CD8-positive, alpha-beta T cell (primary cell): ENCODE measurements at regions of chrX and their contacts with region 1.

Region 1: GRCh38 chrX:48021026-48021900 is 14.5 kb downstream of the SPACA5 start:
- DNase-seq: peak; percentile 51 to 89 (median 76)
- ATAC-seq: peak; percentile 64
- H3K4me3 ChIP-seq: peak overlapping the region; percentile 65 to 74
- H3K4me3 Mint-ChIP-seq: peak overlapping the region; percentile 95
- H3K27ac ChIP-seq: peak overlapping the region; percentile 73 to 95
- H3K27ac Mint-ChIP-seq: peak overlapping the region; percentile 98
- H3K4me1 ChIP-seq: peaks cover 3% of the 10 kb centered on the region
- H3K4me1 Mint-ChIP-seq: peaks cover 15% of the 10 kb centered on the region
- H3K27me3 ChIP-seq: no peaks in the 10 kb centered on the region
- H3K27me3 Mint-ChIP-seq: no peaks in the 10 kb centered on the region
- CTCF ChIP-seq: no peak

Region 2: GRCh38 chrX:47361538-47362511 is 659.4 kb before region 1 on chrX:
- CTCF ChIA-PET with region 1: no interaction called
- POLR2A ChIA-PET with region 1: no interaction called
- intact Hi-C with region 1: loop called in 1 of 2 experiments (anchors 10 kb)
- DNase-seq: peak in 8 of 9 experiments; percentile 5 to 83 (median 28)
- ATAC-seq: peak; percentile 55
- H3K4me3 ChIP-seq: peak overlapping the region in 1 of 2 experiments; percentile 20
- H3K4me3 Mint-ChIP-seq: peak overlapping the region; percentile 58
- H3K27ac ChIP-seq: peak overlapping the region in 1 of 2 experiments; percentile 83
- H3K27ac Mint-ChIP-seq: peak overlapping the region; percentile 85
- H3K4me1 ChIP-seq: peaks cover 20% of the 10 kb centered on the region
- H3K4me1 Mint-ChIP-seq: peaks cover 33% of the 10 kb centered on the region
- H3K27me3 ChIP-seq: no peaks in the 10 kb centered on the region
- H3K27me3 Mint-ChIP-seq: no peaks in the 10 kb centered on the region
- CTCF ChIP-seq: no peak

Region 3: DNA sequence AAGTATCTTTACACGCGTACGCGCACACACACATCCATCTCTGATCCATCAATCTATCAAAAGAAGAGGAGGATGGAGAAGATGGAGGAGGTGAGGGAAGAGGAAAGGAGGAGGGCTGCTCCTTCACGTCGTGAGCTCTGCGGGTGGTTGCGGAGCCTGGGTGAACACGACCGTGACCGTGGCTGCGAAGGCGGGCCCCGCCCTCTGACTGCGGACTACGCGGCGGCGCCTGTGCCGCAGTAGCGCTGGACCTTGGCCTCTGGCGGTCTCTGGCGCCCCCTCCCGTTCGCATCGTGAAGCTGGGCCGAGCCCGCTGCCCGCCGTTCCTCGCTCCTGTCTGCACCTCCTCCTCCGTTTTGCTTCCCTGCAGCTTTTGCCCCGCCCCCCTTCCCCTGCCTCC is 498.0 kb before region 1 on chrX:
- CTCF ChIA-PET with region 1: no interaction called
- POLR2A ChIA-PET with region 1: no interaction called
- intact Hi-C with region 1: loop called in 1 of 2 experiments (anchors 5 kb)
- DNase-seq: peak; percentile 53 to 90 (median 78)
- ATAC-seq: peak; percentile 97
- H3K4me3 ChIP-seq: peak overlapping the region; percentile 47 to 49
- H3K4me3 Mint-ChIP-seq: peak overlapping the region; percentile 69
- H3K27ac ChIP-seq: no peak overlapping the region
- H3K27ac Mint-ChIP-seq: no peak overlapping the region
- H3K4me1 ChIP-seq: no peaks in the 10 kb centered on the region
- H3K4me1 Mint-ChIP-seq: peaks cover 5% of the 10 kb centered on the region
- H3K27me3 ChIP-seq: no peaks in the 10 kb centered on the region
- H3K27me3 Mint-ChIP-seq: no peaks in the 10 kb centered on the region
- CTCF ChIP-seq: peak; percentile 72

Region 4: GRCh38 chrX:47619486-47620302 is 401.6 kb before region 1 on chrX and contains the start of gene SYN1:
- CTCF ChIA-PET with region 1: no interaction called
- POLR2A ChIA-PET with region 1: no interaction called
- intact Hi-C with region 1: loop called in 1 of 2 experiments (anchors 2 kb)
- DNase-seq: peak; percentile 63 to 93 (median 83)
- ATAC-seq: peak; percentile 89
- H3K4me3 ChIP-seq: peak within 1 kb of the TSS; percentile 39 to 41
- H3K4me3 Mint-ChIP-seq: peak within 1 kb of the TSS; percentile 46
- H3K27ac ChIP-seq: no peak within 1 kb of the TSS
- H3K27ac Mint-ChIP-seq: no peak within 1 kb of the TSS
- H3K4me1 ChIP-seq: peaks cover 10% of the 10 kb centered on the region
- H3K4me1 Mint-ChIP-seq: peaks cover 21% of the 10 kb centered on the region
- H3K27me3 ChIP-seq: no peaks in the 10 kb centered on the region
- H3K27me3 Mint-ChIP-seq: peaks cover 8% of the 10 kb centered on the region
- CTCF ChIP-seq: no peak
- total RNA-seq, gene SYN1: 0.17 TPM in 1 of 2 experiments, not detected in the other

Region 5: DNA sequence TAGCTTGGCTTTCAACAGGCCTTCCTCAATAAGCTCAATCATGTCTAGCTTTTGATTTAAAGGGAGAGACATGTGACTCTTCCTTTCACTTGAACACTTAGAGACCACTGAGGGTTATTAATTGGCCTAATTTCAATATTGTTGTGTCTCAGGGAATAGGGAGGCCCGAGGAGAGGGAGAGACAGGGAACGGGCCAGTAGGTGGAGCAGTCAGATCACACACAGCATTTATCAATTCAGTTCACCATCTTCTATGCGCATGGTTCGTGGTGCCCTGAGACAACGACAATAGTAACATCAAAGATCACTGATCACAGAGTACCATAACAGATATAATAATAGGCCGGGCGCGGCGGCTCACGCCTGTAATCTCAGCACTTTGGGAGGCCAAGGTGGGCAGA is 166.8 kb before region 1 on chrX:
- CTCF ChIA-PET with region 1: interaction called, 25 read pairs
- POLR2A ChIA-PET with region 1: no interaction called
- intact Hi-C with region 1: loop called in 1 of 2 experiments (anchors 1 kb)
- DNase-seq: peak in 5 of 9 experiments; percentile 20 to 51 (median 25)
- ATAC-seq: no peak
- H3K4me3 ChIP-seq: no peak overlapping the region
- H3K4me3 Mint-ChIP-seq: no peak overlapping the region
- H3K27ac ChIP-seq: no peak overlapping the region
- H3K27ac Mint-ChIP-seq: no peak overlapping the region
- H3K4me1 ChIP-seq: no peaks in the 10 kb centered on the region
- H3K4me1 Mint-ChIP-seq: peaks cover 10% of the 10 kb centered on the region
- H3K27me3 ChIP-seq: no peaks in the 10 kb centered on the region
- H3K27me3 Mint-ChIP-seq: no peaks in the 10 kb centered on the region
- CTCF ChIP-seq: no peak

Region 6: DNA sequence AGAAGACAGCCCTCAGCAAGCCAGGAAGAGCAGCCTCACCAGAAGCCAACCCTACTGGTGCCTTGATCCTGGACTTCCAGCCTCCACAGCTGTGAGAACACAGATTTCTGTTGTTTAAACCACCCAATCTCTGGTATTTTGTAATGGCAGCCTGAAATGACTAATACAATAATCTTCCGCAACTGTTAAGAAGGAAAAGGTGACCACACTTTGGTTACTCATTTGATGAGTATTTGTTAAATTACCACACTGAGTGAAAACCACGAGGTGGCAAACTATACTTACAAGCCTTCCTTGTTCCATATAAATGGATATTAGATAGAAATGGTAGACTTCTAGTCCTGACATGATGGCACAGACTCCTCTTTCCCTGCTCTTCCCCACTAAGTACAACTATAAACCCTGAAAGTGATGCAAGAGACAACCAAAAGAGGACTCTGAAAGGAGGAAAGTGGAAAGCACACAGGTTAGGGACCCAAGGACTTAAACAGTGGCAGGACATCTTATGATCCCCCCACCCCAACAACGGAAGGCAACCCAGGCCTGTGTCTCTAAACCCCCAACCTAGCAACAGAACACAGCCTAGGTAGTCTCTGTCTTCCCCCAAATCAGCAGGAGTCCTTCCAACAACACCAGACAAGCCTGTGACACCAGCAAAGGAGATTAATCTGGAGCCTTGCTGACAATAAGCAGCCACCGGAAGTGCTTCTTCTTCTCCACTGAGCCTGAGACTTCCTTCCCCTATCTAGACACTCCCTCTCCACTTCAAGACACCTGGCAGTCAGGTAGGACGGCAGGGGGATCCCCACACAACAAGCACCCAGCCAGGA is 29.8 kb before region 1 on chrX:
- CTCF ChIA-PET with region 1: no interaction called
- POLR2A ChIA-PET with region 1: no interaction called
- intact Hi-C with region 1: loop called (anchors 2 to 5 kb)
- DNase-seq: peak in 3 of 9 experiments; percentile 9 to 11 (median 10)
- ATAC-seq: no peak
- H3K4me3 ChIP-seq: no peak overlapping the region
- H3K4me3 Mint-ChIP-seq: no peak overlapping the region
- H3K27ac ChIP-seq: no peak overlapping the region
- H3K27ac Mint-ChIP-seq: peak overlapping the region; percentile 86
- H3K4me1 ChIP-seq: peaks cover 14% of the 10 kb centered on the region
- H3K4me1 Mint-ChIP-seq: peaks cover 41% of the 10 kb centered on the region
- H3K27me3 ChIP-seq: no peaks in the 10 kb centered on the region
- H3K27me3 Mint-ChIP-seq: no peaks in the 10 kb centered on the region
- CTCF ChIP-seq: no peak